CD8-positive, alpha-beta T cell (primary cell): ENCODE measurements at regions of chr11 and their contacts with region 1.

Region 1: DNA sequence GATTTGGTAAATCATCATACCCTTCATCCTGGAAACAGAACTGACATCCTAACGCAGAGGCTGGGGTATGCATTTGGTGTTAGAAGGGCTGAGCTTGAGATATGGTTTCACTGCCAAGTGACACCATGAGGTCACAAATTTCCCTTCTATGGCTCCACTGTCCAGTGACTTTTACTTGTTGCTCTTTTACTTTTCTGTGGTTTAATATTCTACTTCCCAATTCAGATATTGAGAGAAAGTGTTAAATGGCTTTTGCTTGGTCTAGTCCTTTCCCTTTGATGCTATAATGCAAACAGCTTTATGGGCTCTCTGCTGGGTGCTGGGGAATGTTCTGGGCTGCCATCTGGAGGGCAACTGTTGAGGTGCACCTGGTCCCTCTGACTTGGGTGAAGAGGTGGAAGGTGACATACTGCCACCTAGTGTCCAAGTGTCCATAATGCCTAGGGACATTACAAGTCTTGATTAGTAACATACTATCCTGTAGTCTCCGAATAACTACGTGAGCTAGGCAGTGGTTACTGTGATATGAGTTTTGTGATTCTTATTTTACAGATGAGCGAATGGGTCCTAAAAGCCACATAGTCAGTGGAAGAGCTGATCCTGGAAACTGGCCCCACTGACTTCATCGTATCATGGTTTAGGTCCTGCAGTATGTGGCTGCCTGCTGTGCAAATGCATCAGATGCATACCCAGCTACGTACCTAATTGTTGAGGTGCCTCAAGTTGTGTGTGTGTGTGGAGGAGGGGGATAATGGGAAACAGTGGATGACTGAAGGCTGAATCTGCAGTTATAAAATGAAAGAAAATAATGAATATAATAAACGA is 149.1 kb upstream of the RAG2 start:
- DNase-seq: peak; percentile 62 to 91 (median 77)
- ATAC-seq: peak; percentile 100
- H3K4me3 ChIP-seq: no peak overlapping the region
- H3K4me3 Mint-ChIP-seq: no peak overlapping the region
- H3K27ac ChIP-seq: no peak overlapping the region
- H3K27ac Mint-ChIP-seq: no peak overlapping the region
- H3K4me1 ChIP-seq: no peaks in the 10 kb centered on the region
- H3K4me1 Mint-ChIP-seq: peaks cover 5% of the 10 kb centered on the region
- H3K27me3 ChIP-seq: no peaks in the 10 kb centered on the region
- H3K27me3 Mint-ChIP-seq: peaks cover 27% of the 10 kb centered on the region
- CTCF ChIP-seq: peak; percentile 91

Region 2: DNA sequence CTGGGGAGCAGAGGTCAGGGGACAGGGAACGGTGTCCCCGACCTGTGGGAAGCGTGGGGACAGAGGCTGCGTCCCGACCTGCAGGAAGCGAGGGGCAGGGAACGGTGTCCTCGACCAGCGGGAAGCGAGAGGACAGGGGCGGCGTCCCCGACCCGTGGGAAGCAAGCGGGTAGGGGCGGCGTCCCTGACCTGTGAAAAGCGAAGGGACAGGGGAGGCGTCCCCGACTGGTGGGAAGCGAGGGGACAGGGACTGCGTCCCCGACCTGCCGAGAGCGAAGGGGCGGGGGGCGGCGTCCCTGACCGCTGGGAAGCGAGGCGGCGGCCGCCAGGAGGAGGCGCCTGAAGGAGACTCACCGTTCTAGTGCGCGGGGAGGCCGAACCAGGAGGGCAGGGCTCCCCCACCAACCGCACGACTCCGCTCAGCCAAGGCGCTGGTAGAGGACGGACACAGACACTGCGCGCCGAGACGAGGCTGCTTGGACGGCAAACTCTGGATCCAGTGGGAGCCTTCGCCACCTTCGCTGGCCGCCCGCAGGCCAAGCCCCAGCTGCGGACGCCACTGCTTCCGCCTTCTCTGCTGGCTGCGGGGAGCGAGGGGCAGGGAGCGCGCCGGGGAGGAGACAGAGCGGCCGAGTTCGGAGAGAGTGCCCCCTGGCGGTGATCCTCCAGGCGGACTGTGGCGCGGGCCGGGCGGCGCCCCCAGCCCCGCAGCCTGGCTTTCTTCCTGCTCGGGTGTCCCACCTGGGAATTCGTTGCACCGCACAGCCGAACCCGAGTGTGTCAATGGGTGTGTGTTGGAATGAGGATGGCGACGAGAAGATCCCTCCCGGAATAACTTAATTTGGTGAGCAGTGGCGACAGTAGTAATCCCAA is 237.2 kb before region 1 on chr11 and contains the start of gene TRAF6:
- CTCF ChIA-PET with region 1: no interaction called
- POLR2A ChIA-PET with region 1: no interaction called
- intact Hi-C with region 1: loop called in 1 of 2 experiments (anchors 2 kb)
- DNase-seq: peak; percentile 74 to 95 (median 91)
- ATAC-seq: peak; percentile 95
- H3K4me3 ChIP-seq: peak within 1 kb of the TSS; percentile 84 to 97
- H3K4me3 Mint-ChIP-seq: peak within 1 kb of the TSS; percentile 92
- H3K27ac ChIP-seq: peak within 1 kb of the TSS; percentile 74 to 83
- H3K27ac Mint-ChIP-seq: peak within 1 kb of the TSS; percentile 92
- H3K4me1 ChIP-seq: peaks cover 16% of the 10 kb centered on the region
- H3K4me1 Mint-ChIP-seq: peaks cover 37% of the 10 kb centered on the region
- H3K27me3 ChIP-seq: no peaks in the 10 kb centered on the region
- H3K27me3 Mint-ChIP-seq: peaks cover 5% of the 10 kb centered on the region
- CTCF ChIP-seq: peak; percentile 84
- total RNA-seq, gene TRAF6: 29.7 to 31.3 TPM

Region 3: DNA sequence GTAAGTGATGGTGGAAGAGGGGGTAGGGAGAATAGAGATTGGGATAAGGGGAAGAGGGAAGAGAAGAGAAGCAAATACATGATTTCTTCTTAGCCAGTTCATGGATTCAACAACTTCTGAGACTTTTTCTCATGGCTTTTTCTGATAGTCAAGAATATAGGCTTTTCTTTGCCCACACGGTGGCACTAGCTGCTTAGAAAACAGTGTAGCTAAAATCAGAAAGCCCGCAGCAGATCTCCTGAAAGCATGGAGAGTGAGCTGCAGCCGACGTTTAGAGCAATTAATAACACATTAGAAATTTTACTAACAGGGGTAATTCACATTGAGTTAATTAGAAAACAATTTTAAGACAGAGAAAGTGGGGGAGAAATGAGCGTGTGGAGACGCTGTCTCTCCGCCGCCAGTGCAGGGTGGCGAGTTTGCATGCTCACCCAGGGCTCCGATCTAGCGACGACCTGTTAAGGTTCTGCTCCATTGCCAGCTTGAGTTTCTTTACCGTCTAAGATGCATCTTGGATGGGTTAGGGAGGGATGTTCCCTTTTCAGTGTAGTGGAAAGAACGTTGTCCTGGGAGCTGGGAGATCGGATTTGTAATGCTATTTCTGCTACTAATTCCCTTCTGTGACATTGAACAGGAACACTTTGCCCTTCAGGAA is 182.6 kb before region 1 on chr11:
- CTCF ChIA-PET with region 1: interaction called, 134 read pairs
- POLR2A ChIA-PET with region 1: interaction called, 3 read pairs
- intact Hi-C with region 1: loop called (anchors 1 kb)
- DNase-seq: peak in 7 of 9 experiments; percentile 17 to 73 (median 45)
- ATAC-seq: peak; percentile 59
- H3K4me3 ChIP-seq: peak overlapping the region in 1 of 2 experiments; percentile 23
- H3K4me3 Mint-ChIP-seq: peak overlapping the region; percentile 71
- H3K27ac ChIP-seq: no peak overlapping the region
- H3K27ac Mint-ChIP-seq: no peak overlapping the region
- H3K4me1 ChIP-seq: peaks cover 3% of the 10 kb centered on the region
- H3K4me1 Mint-ChIP-seq: peaks cover 13% of the 10 kb centered on the region
- H3K27me3 ChIP-seq: no peaks in the 10 kb centered on the region
- H3K27me3 Mint-ChIP-seq: peaks cover 27% of the 10 kb centered on the region
- CTCF ChIP-seq: peak; percentile 71

Region 4: GRCh38 chr11:36574486-36574885 is 172.6 kb before region 1 on chr11:
- CTCF ChIA-PET with region 1: interaction called, 12 read pairs
- POLR2A ChIA-PET with region 1: no interaction called
- intact Hi-C with region 1: no loop called
- DNase-seq: no peak
- ATAC-seq: no peak
- H3K4me3 ChIP-seq: no peak overlapping the region
- H3K4me3 Mint-ChIP-seq: no peak overlapping the region
- H3K27ac ChIP-seq: no peak overlapping the region
- H3K27ac Mint-ChIP-seq: no peak overlapping the region
- H3K4me1 ChIP-seq: no peaks in the 10 kb centered on the region
- H3K4me1 Mint-ChIP-seq: no peaks in the 10 kb centered on the region
- H3K27me3 ChIP-seq: no peaks in the 10 kb centered on the region
- H3K27me3 Mint-ChIP-seq: peaks cover 23% of the 10 kb centered on the region
- CTCF ChIP-seq: no peak

Region 5: DNA sequence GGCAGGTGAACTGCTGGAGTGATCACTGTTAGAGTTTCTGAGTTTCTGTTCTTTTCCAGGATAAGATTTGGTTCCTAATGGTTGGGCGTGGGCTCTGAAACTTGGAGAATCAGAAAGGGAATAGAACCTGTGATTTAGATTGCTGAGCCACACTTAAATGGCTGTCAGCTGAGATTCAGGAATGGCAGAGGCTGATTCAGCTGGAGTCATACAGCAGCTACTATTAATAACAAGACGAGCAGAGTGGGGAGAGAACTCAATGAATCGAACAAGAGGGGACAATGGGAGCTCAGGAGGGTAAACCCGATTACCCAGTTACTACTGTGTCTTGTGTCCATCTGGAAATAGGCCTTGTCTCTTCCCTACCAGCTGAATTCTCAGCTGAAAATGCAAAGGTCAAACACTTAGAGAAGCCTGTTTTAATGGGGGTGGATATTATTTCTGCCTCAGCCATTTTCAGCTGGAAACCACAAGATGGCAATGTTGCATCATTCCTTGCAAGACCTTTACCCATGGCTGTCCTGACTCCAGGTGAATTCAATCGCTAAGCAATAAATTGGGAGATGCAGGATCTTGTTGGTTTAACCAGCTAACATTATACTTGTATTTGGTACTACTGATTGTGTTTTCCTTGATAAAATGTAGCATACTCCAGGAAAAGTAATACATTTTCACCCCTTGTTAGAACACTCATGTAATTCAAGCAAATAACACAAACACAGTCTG is 44.6 kb before region 1 on chr11:
- CTCF ChIA-PET with region 1: interaction called, 15 read pairs
- POLR2A ChIA-PET with region 1: no interaction called
- intact Hi-C with region 1: loop called in 1 of 2 experiments (anchors 1 kb)
- DNase-seq: peak in 2 of 9 experiments; percentile 29 to 46
- ATAC-seq: no peak
- H3K4me3 ChIP-seq: no peak overlapping the region
- H3K4me3 Mint-ChIP-seq: no peak overlapping the region
- H3K27ac ChIP-seq: no peak overlapping the region
- H3K27ac Mint-ChIP-seq: no peak overlapping the region
- H3K4me1 ChIP-seq: no peaks in the 10 kb centered on the region
- H3K4me1 Mint-ChIP-seq: no peaks in the 10 kb centered on the region
- H3K27me3 ChIP-seq: peaks cover 0 to 5% of the 10 kb centered on the region in 2 experiments
- H3K27me3 Mint-ChIP-seq: peaks cover 44% of the 10 kb centered on the region
- CTCF ChIP-seq: peak; percentile 24

Region 6: DNA sequence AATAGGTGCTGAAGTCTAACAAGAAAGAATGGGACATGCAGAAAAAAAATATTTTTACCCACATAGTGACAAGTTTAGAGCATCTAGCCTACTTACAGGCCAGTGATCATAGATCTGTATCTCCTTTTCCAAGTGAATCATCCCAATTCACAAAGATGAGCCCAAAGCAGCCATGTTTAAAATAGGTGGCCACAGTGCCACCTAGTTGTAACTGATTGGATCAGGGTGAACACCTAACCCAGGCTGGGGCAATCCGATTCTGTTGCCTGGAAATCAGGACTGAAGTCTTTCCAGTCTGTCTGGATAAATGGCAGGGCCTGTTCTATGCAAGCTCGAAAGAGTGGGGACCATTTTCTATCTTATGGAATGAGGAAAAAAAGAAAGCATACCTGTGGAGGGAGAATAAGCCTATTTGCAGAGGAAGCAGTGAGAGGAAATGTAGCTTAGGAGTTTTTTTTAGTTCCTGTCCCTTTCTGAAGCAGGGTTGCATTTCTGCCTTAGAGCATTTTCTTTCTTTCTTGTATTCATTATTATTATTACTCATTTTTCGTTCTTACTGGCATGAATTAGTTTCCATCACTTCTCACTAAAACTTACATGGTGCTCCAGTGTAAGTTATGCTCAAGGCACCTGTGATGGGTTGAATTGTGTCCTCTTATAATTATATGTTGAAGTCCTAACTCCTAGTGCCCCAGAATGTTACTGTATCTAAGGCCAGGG is 35.8 kb before region 1 on chr11:
- CTCF ChIA-PET with region 1: interaction called, 15 read pairs
- POLR2A ChIA-PET with region 1: no interaction called
- intact Hi-C with region 1: no loop called
- DNase-seq: peak in 1 of 9 experiments; percentile 5
- ATAC-seq: no peak
- H3K4me3 ChIP-seq: no peak overlapping the region
- H3K4me3 Mint-ChIP-seq: no peak overlapping the region
- H3K27ac ChIP-seq: no peak overlapping the region
- H3K27ac Mint-ChIP-seq: no peak overlapping the region
- H3K4me1 ChIP-seq: no peaks in the 10 kb centered on the region
- H3K4me1 Mint-ChIP-seq: no peaks in the 10 kb centered on the region
- H3K27me3 ChIP-seq: no peaks in the 10 kb centered on the region
- H3K27me3 Mint-ChIP-seq: peaks cover 41% of the 10 kb centered on the region
- CTCF ChIP-seq: no peak